A673 (cell line): ENCODE measurements at regions of chr3 and their contacts with region 1.

Region 1: GRCh38 chr3:114418724-114419543 is 125.1 kb downstream of the TIGIT start:
- DNase-seq: peak; percentile 89
- H3K4me3 ChIP-seq: no peak overlapping the region
- H3K27ac ChIP-seq: no peak overlapping the region
- H3K4me1 ChIP-seq: peaks cover 30% of the 10 kb centered on the region
- H3K27me3 ChIP-seq: no peaks in the 10 kb centered on the region
- CTCF ChIP-seq: peak; percentile 84

Region 2: GRCh38 chr3:114152519-114153151 is 266.3 kb before region 1 on chr3:
- CTCF ChIA-PET with region 1: no interaction called
- POLR2A ChIA-PET with region 1: no interaction called
- intact Hi-C with region 1: loop called (anchors 10 kb)
- DNase-seq: peak; percentile 90
- H3K4me3 ChIP-seq: peak overlapping the region; percentile 31
- H3K27ac ChIP-seq: no peak overlapping the region
- H3K4me1 ChIP-seq: peaks cover 4% of the 10 kb centered on the region
- H3K27me3 ChIP-seq: peaks cover 4% of the 10 kb centered on the region
- CTCF ChIP-seq: peak; percentile 94

Region 3: DNA sequence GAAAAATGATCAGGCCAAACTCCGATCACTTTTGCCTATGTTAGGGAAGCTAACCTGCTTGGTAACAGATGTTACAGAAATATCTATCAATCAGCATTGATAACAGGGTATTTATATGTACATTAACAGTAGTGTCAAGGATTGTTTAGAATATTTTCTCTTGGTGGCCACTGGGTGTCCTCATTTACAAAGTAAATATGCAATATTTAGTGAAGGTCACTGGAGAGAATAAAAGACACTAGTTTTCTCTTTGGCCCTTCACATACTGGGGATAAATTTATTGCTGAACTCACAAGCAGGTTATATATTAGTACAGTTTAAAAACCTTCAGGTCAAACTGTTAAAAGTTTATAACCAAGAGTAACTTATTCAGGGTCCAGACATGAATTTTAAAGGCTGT is 56.1 kb before region 1 on chr3:
- CTCF ChIA-PET with region 1: interaction called, 8 read pairs
- POLR2A ChIA-PET with region 1: no interaction called
- intact Hi-C with region 1: loop called (anchors 5 kb)
- DNase-seq: peak; percentile 69
- H3K4me3 ChIP-seq: no peak overlapping the region
- H3K27ac ChIP-seq: no peak overlapping the region
- H3K4me1 ChIP-seq: peaks cover 12% of the 10 kb centered on the region
- H3K27me3 ChIP-seq: no peaks in the 10 kb centered on the region
- CTCF ChIP-seq: peak; percentile 71

Region 4: GRCh38 chr3:114383875-114384557 is 34.9 kb before region 1 on chr3:
- CTCF ChIA-PET with region 1: interaction called, 56 read pairs
- POLR2A ChIA-PET with region 1: no interaction called
- intact Hi-C with region 1: no loop called
- DNase-seq: peak; percentile 88
- H3K4me3 ChIP-seq: peak overlapping the region; percentile 35
- H3K27ac ChIP-seq: peak overlapping the region; percentile 80
- H3K4me1 ChIP-seq: peaks cover 29% of the 10 kb centered on the region
- H3K27me3 ChIP-seq: no peaks in the 10 kb centered on the region
- CTCF ChIP-seq: peak; percentile 96

Region 5: DNA sequence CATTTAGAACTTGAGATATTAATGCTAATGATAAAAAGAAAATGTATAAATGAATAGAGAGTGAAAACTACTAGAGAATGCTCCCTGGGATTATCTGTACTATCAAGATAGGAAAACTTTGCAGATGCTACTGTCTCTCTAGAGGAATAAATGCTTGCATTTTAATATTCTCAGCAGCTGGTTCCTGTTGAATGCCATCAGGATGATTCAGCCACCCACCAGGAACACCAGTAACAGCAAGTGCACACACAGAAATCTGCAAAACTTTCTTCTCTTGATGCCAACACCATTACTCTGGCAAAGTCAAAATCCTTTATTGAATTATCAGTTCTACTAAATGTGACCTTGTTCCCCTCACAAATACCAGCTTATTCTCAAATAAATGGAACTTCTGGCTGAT is 23.3 kb after region 1 on chr3:
- CTCF ChIA-PET with region 1: interaction called, 21 read pairs
- POLR2A ChIA-PET with region 1: no interaction called
- intact Hi-C with region 1: loop called (anchors 5 kb)
- DNase-seq: peak; percentile 87
- H3K4me3 ChIP-seq: peak overlapping the region; percentile 19
- H3K27ac ChIP-seq: peak overlapping the region; percentile 71
- H3K4me1 ChIP-seq: peaks cover 67% of the 10 kb centered on the region
- H3K27me3 ChIP-seq: no peaks in the 10 kb centered on the region
- CTCF ChIP-seq: 0 out of 2 replicates have a peak, but pooled peaks have one; percentile 10

Region 6: GRCh38 chr3:114451561-114452018 is 32.7 kb after region 1 on chr3:
- CTCF ChIA-PET with region 1: interaction called, 21 read pairs
- POLR2A ChIA-PET with region 1: no interaction called
- intact Hi-C with region 1: loop called (anchors 5 kb)
- DNase-seq: no peak
- H3K4me3 ChIP-seq: peak overlapping the region; percentile 58
- H3K27ac ChIP-seq: peak overlapping the region; percentile 83
- H3K4me1 ChIP-seq: peaks cover 67% of the 10 kb centered on the region
- H3K27me3 ChIP-seq: no peaks in the 10 kb centered on the region
- CTCF ChIP-seq: no peak

Region 7: GRCh38 chr3:115836944-115837343 is 1418.0 kb after region 1 on chr3:
- CTCF ChIA-PET with region 1: no interaction called
- POLR2A ChIA-PET with region 1: no interaction called
- intact Hi-C with region 1: loop called (anchors 10 kb)
- DNase-seq: peak; percentile 82
- H3K4me3 ChIP-seq: no peak overlapping the region
- H3K27ac ChIP-seq: peak overlapping the region; percentile 96
- H3K4me1 ChIP-seq: peaks cover 72% of the 10 kb centered on the region
- H3K27me3 ChIP-seq: no peaks in the 10 kb centered on the region
- CTCF ChIP-seq: peak; percentile 74